Right ventricle myocardium inferior (tissue), 1 donor: ENCODE measurements at regions of chr19 and their contacts with region 1.

Region 1: DNA sequence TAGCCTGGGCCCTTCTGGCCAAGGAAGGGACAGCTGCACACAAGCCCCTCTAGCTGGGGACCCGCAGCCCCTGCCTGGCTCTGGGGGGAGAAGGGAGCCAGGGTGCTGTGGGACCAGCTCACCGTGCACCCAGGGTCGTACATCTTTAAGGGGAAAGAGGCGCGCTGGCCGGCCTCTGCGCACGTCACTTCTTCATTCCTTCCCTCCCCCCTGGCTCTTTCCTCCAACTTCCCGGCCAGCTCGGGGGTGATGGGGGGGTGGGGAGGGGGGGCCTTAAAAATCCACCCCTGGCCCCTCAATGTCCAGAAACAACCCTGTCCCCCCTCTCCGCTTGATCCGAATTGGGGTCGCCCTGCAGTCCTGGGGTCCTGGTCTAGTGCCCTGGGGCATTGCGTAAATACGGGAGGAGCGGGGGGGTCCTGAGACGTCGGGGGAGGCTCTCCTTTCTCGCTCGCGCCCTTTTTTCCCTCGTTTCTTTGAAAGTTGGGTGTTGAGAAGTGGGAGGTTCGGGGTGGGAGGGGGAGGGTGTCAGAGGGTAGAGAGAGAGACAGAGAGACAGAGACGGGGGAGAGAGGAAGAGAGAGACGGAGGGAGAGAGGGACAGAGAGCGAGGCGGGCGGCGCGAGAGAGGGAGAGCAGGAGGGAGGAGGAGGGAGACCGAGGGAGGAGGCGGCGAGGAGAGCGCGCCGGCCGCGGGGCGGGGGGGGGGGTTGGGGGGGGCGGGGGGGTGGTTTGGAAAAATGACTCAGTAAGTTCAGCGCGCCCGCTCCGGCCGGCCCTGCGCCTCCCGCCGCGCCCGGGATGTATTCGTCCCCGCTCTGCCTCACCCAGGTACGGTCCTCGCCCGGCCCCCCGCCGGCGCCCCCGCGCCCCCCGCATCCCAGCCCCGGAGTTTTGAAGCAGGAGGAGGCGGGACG is at the start of gene NFIC:
- DNase-seq: peak; percentile 91
- ATAC-seq: peak; percentile 76
- total RNA-seq, gene NFIC: 164 TPM

Region 2: DNA sequence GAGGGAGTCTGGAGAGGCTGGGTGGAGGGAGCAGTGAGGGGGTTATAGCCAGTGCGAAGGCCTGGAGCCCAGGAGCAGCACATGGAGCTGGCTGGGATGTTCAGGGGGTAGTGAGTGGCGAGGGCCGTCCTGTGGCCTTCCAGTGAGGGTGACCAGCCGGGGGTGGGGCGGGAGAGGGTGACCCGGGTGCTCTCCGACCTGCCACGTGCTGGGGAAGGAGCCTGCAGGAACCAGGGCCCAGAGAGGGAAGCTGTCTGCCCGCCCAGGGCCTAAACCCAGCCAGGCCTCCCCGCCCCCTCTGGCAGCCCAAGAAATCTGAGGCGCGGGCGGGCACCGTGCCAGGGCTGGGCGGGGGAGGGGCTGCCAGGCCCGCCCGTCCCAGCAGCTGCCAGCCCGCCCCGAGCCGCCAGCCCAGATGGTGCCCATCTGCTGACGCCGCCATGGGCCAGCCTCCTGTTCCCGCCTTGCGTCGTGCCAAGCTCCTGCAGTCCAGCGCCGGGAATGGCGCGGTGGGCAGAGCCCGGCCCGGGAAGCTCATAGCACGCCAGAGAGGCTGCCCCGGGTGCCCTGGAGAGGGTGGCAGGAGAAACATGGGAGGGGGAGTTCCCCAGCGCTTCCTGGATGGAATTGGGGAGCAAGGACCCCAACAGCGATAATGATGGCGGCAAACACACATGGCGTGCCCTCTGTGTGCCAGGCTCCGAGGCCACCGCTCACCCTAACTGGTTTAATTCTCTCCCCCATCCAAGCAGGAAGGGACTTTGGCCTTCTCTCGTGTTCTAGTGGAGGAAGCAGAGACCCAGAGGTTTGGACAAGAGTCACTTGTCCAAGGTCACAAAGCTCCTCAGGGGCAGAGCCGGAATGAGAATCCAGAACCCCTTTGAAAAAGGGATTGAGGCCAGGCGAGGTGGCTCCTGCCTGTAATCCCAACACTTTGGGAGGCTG is 21.8 kb after region 1 on chr19:
- intact Hi-C with region 1: loop called (anchors 2 kb)
- DNase-seq: peak; percentile 90
- ATAC-seq: peak; percentile 79

Region 3: DNA sequence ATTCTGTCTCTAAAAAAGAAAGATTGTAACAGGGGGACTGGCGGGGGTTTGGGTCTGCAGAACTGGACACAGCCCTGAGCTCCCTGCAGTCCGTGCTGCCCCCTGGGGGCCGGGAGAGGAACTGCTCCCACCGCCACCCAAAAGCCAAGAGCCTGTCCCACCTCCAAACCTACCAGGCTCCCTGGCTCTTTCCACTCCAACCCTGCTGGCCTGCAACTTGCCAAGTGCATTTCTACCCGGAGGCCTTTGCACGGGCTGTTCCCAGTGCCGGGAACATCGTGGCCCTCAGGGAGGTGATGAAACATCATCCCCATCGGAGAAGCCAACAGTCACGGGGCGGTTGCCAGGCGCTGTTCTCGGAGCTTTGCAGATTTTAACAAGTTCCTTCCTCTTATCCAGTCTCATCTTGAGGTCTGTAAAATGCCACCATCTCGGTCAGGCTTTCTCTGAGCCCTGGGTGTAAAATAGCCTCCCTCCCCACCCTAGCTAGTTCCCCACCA is 63.5 kb after region 1 on chr19:
- intact Hi-C with region 1: loop called (anchors 2 kb)
- DNase-seq: peak; percentile 94
- ATAC-seq: peak; percentile 88

Region 4: DNA sequence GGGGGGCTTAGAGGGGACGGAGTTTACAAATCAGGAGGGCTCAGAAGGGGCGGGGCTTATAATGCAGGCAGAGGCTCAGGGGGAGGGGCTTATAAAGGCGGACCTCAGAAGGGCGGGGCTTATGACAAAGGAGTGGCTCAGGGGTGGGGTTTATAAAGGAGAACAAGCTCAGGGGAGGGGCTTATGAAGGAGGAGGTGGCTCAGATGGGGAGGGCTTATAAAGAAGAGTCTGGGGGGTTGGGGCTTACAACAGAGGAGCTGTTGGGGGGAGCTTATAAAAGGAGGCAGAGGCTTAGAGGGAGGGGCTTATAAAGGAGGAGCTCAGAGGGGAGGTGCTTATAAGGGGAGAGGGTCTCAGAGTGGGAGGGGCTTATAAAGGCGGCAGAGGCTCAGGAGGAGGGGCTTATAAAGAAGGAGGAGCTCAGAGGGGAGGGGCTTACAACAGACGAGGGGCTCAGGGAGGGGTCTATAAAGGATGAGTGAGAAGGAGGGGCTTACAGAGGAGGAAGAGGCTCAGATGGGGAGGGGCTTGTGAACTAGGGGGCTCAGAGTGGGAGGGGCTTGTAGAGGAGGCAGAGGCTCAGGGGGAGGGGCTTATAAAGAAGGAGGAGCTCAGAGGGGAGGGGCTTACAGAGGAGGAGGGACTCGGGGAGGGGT is 113.2 kb after region 1 on chr19:
- intact Hi-C with region 1: no loop called
- DNase-seq: no peak
- ATAC-seq: no peak